K562 (cell line): ENCODE measurements at regions of chr1 and their contacts with region 1.

Region 1: GRCh38 chr1:202462342-202463076 is 114.0 kb downstream of the PPP1R12B start:
- DNase-seq: peak in 3 of 4 experiments; percentile 25 to 77 (median 47)
- ATAC-seq: peak; percentile 70
- H3K4me3 ChIP-seq: no peak overlapping the region
- H3K27ac ChIP-seq: peak overlapping the region; percentile 2; the same call in 1 of the 3 replicates
- H3K4me1 ChIP-seq: peaks cover 0 to 7% of the 10 kb centered on the region in 2 experiments; a peak in 2 of 5 replicates
- H3K27me3 ChIP-seq: no peaks in the 10 kb centered on the region
- CTCF ChIP-seq: no peak
- EP300 ChIP-seq: 0 out of 2 replicates have a peak, but pooled peaks have one; percentile 44
- POLR2A ChIP-seq: no peak
- RAD21 ChIP-seq: no peak; a peak in 1 of 4 replicates

Region 2: GRCh38 chr1:201912832-201913231 is 549.7 kb before region 1 on chr1:
- CTCF ChIA-PET with region 1: no interaction called
- POLR2A ChIA-PET with region 1: no interaction called
- in situ Hi-C with region 1: no loop called
- intact Hi-C with region 1: no loop called
- DNase-seq: no peak
- ATAC-seq: no peak
- H3K4me3 ChIP-seq: no peak overlapping the region
- H3K27ac ChIP-seq: no peak overlapping the region
- H3K4me1 ChIP-seq: peaks cover 14 to 15% of the 10 kb centered on the region in 2 experiments
- H3K27me3 ChIP-seq: no peaks in the 10 kb centered on the region
- CTCF ChIP-seq: no peak
- EP300 ChIP-seq: no peak
- POLR2A ChIP-seq: no peak
- RAD21 ChIP-seq: no peak

Region 3: GRCh38 chr1:201970334-201971159 is 492.0 kb before region 1 on chr1:
- CTCF ChIA-PET with region 1: no interaction called
- POLR2A ChIA-PET with region 1: no interaction called
- in situ Hi-C with region 1: no loop called
- intact Hi-C with region 1: no loop called
- DNase-seq: no peak
- ATAC-seq: peak; percentile 56
- H3K4me3 ChIP-seq: no peak overlapping the region
- H3K27ac ChIP-seq: no peak overlapping the region
- H3K4me1 ChIP-seq: no peaks in the 10 kb centered on the region; a peak in 1 of 5 replicates
- H3K27me3 ChIP-seq: no peaks in the 10 kb centered on the region
- CTCF ChIP-seq: no peak
- EP300 ChIP-seq: no peak
- POLR2A ChIP-seq: peak; percentile 65
- RAD21 ChIP-seq: no peak

Region 4: GRCh38 chr1:202571347-202572339 is 109.1 kb after region 1 on chr1:
- CTCF ChIA-PET with region 1: interaction called, 4 read pairs
- POLR2A ChIA-PET with region 1: no interaction called
- in situ Hi-C with region 1: no loop called
- intact Hi-C with region 1: loop called (anchors 2 kb)
- DNase-seq: peak; percentile 63 to 72 (median 68)
- ATAC-seq: peak; percentile 91
- H3K4me3 ChIP-seq: no peak overlapping the region
- H3K27ac ChIP-seq: no peak overlapping the region
- H3K4me1 ChIP-seq: no peaks in the 10 kb centered on the region
- H3K27me3 ChIP-seq: no peaks in the 10 kb centered on the region
- CTCF ChIP-seq: peak; percentile 87 to 96 (median 90)
- EP300 ChIP-seq: no peak
- POLR2A ChIP-seq: no peak
- RAD21 ChIP-seq: peak; percentile 98

Region 5: GRCh38 chr1:202710070-202711045 is 247.8 kb after region 1 on chr1 and contains the start of gene SYT2:
- CTCF ChIA-PET with region 1: no interaction called
- POLR2A ChIA-PET with region 1: no interaction called
- in situ Hi-C with region 1: no loop called
- intact Hi-C with region 1: loop called (anchors 10 kb)
- DNase-seq: peak; percentile 32 to 81 (median 58)
- ATAC-seq: peak; percentile 74
- H3K4me3 ChIP-seq: no peak within 1 kb of the TSS
- H3K27ac ChIP-seq: no peak within 1 kb of the TSS
- H3K4me1 ChIP-seq: peaks cover 0 to 16% of the 10 kb centered on the region in 2 experiments; a peak in 2 of 5 replicates
- H3K27me3 ChIP-seq: peaks cover 68 to 84% of the 10 kb centered on the region in 2 experiments
- CTCF ChIP-seq: no peak
- EP300 ChIP-seq: no peak
- POLR2A ChIP-seq: no peak
- RAD21 ChIP-seq: no peak
- polyA plus RNA-seq, gene SYT2: not detected